CD4-positive, alpha-beta T cell (primary cell): ENCODE measurements at regions of chr1 and their contacts with region 1.

Region 1: DNA sequence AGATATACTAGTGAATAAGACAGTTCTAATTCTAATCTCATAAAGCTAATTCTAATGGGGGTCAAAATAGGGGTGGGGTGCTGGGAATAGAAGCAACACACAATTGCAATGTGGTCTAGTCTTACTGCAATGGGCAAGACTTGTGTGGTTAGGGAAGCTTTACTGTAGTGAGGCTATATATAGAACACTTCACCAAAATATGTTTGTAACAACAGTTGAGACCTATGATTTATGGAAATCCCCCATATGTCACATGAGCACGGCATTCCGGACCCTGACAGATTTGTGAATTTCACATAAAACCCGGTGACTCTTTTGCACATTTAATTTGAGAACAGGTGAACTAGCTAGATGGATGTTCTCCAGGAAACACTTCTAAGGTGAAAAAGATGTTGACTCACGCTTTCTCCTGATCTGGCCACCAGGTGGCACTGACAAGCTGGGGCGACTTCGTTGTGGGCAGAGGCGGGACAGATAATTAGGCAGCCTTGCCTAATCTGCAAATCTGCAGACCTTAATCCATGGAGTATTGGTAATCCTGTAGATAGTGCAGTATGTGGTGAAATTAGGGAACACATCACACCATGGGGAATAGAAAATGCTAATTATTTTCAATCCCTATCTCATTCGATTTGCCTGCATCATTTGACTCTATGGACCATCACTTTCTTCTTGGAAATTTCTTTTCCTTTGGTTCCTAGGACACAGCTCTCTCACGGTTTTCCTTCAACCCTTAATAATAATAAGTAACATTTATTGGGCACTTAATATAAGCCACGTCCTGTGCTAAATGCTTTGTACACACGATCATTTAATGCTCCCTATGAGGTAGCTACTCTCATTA is 37.7 kb downstream of the KIAA0040 start:
- DNase-seq: peak; percentile 66 to 87 (median 74)
- ATAC-seq: peak; percentile 61
- H3K4me3 ChIP-seq: no peak overlapping the region
- H3K4me3 Mint-ChIP-seq: no peak overlapping the region
- H3K27ac ChIP-seq: no peak overlapping the region
- H3K27ac Mint-ChIP-seq: no peak overlapping the region
- H3K4me1 ChIP-seq: peaks cover 12% of the 10 kb centered on the region
- H3K4me1 Mint-ChIP-seq: peaks cover 25% of the 10 kb centered on the region
- H3K27me3 ChIP-seq: peaks cover 8 to 10% of the 10 kb centered on the region in 2 experiments
- H3K27me3 Mint-ChIP-seq: peaks cover 40% of the 10 kb centered on the region
- CTCF ChIP-seq: peak; percentile 86

Region 2: GRCh38 chr1:175169305-175170018 is 14.6 kb after region 1 on chr1:
- CTCF ChIA-PET with region 1: interaction called, 11 read pairs
- POLR2A ChIA-PET with region 1: no interaction called
- intact Hi-C with region 1: no loop called
- DNase-seq: no peak
- ATAC-seq: no peak
- H3K4me3 ChIP-seq: no peak overlapping the region
- H3K4me3 Mint-ChIP-seq: no peak overlapping the region
- H3K27ac ChIP-seq: no peak overlapping the region
- H3K27ac Mint-ChIP-seq: peak overlapping the region; percentile 22
- H3K4me1 ChIP-seq: peaks cover 31% of the 10 kb centered on the region
- H3K4me1 Mint-ChIP-seq: peaks cover 72% of the 10 kb centered on the region
- H3K27me3 ChIP-seq: no peaks in the 10 kb centered on the region
- H3K27me3 Mint-ChIP-seq: no peaks in the 10 kb centered on the region
- CTCF ChIP-seq: no peak

Region 3: GRCh38 chr1:175208773-175209492 is 54.1 kb after region 1 on chr1:
- CTCF ChIA-PET with region 1: interaction called, 7 read pairs
- POLR2A ChIA-PET with region 1: interaction called, 11 read pairs
- intact Hi-C with region 1: loop called in 1 of 2 experiments (anchors 1 kb)
- DNase-seq: peak; percentile 28 to 90 (median 44)
- ATAC-seq: peak; percentile 92
- H3K4me3 ChIP-seq: peak overlapping the region; percentile 25
- H3K4me3 Mint-ChIP-seq: peak overlapping the region; percentile 86
- H3K27ac ChIP-seq: peak overlapping the region; percentile 37 to 56
- H3K27ac Mint-ChIP-seq: peak overlapping the region; percentile 86
- H3K4me1 ChIP-seq: peaks cover 37% of the 10 kb centered on the region
- H3K4me1 Mint-ChIP-seq: peaks cover 86% of the 10 kb centered on the region
- H3K27me3 ChIP-seq: no peaks in the 10 kb centered on the region
- H3K27me3 Mint-ChIP-seq: no peaks in the 10 kb centered on the region
- CTCF ChIP-seq: no peak

Region 4: GRCh38 chr1:175481126-175482066 is 326.5 kb after region 1 on chr1:
- CTCF ChIA-PET with region 1: interaction called, 7 read pairs
- POLR2A ChIA-PET with region 1: no interaction called
- intact Hi-C with region 1: loop called in 1 of 2 experiments (anchors 5 kb)
- DNase-seq: peak in 3 of 14 experiments; percentile 6 to 15 (median 10)
- ATAC-seq: no peak
- H3K4me3 ChIP-seq: no peak overlapping the region
- H3K4me3 Mint-ChIP-seq: no peak overlapping the region
- H3K27ac ChIP-seq: no peak overlapping the region
- H3K27ac Mint-ChIP-seq: no peak overlapping the region
- H3K4me1 ChIP-seq: no peaks in the 10 kb centered on the region
- H3K4me1 Mint-ChIP-seq: no peaks in the 10 kb centered on the region
- H3K27me3 ChIP-seq: no peaks in the 10 kb centered on the region
- H3K27me3 Mint-ChIP-seq: peaks cover 21% of the 10 kb centered on the region
- CTCF ChIP-seq: peak; percentile 58

Region 5: GRCh38 chr1:175824079-175824478 is 669.2 kb after region 1 on chr1:
- CTCF ChIA-PET with region 1: no interaction called
- POLR2A ChIA-PET with region 1: no interaction called
- intact Hi-C with region 1: loop called in 1 of 2 experiments (anchors 10 kb)
- DNase-seq: peak in 4 of 14 experiments; percentile 1 to 16 (median 8)
- ATAC-seq: no peak
- H3K4me3 ChIP-seq: no peak overlapping the region
- H3K4me3 Mint-ChIP-seq: no peak overlapping the region
- H3K27ac ChIP-seq: no peak overlapping the region
- H3K27ac Mint-ChIP-seq: no peak overlapping the region
- H3K4me1 ChIP-seq: no peaks in the 10 kb centered on the region
- H3K4me1 Mint-ChIP-seq: no peaks in the 10 kb centered on the region
- H3K27me3 ChIP-seq: peaks cover 0 to 4% of the 10 kb centered on the region in 2 experiments
- H3K27me3 Mint-ChIP-seq: peaks cover 23% of the 10 kb centered on the region
- CTCF ChIP-seq: no peak

Region 6: DNA sequence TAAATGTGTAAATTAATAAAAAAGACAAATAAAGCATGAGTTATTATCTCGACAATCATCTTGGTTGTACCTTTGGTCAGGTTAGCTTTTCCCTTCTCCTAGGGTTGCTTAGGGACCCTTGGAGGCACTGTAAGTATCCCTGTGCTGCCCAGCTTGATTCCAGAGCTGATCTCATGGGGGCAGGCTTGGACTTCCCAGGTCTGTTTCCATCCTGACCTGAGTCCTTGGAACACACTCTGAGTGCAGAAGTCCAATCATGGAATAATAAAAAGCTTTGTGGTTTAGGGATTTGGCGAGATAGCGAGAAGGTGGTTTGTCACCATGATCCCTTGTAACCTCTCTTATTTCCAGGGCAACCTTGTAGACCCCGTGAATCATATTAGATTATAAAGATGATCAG is 1289.4 kb after region 1 on chr1:
- CTCF ChIA-PET with region 1: no interaction called
- POLR2A ChIA-PET with region 1: no interaction called
- intact Hi-C with region 1: no loop called
- DNase-seq: no peak
- ATAC-seq: no peak
- H3K4me3 ChIP-seq: no peak overlapping the region
- H3K4me3 Mint-ChIP-seq: no peak overlapping the region
- H3K27ac ChIP-seq: no peak overlapping the region
- H3K27ac Mint-ChIP-seq: no peak overlapping the region
- H3K4me1 ChIP-seq: no peaks in the 10 kb centered on the region
- H3K4me1 Mint-ChIP-seq: no peaks in the 10 kb centered on the region
- H3K27me3 ChIP-seq: no peaks in the 10 kb centered on the region
- H3K27me3 Mint-ChIP-seq: no peaks in the 10 kb centered on the region
- CTCF ChIP-seq: no peak

Region 7: GRCh38 chr1:176880954-176881595 is 1726.2 kb after region 1 on chr1:
- CTCF ChIA-PET with region 1: no interaction called
- POLR2A ChIA-PET with region 1: no interaction called
- intact Hi-C with region 1: loop called in 1 of 2 experiments (anchors 10 kb)
- DNase-seq: peak in 8 of 14 experiments; percentile 4 to 41 (median 22)
- ATAC-seq: no peak
- H3K4me3 ChIP-seq: no peak overlapping the region
- H3K4me3 Mint-ChIP-seq: no peak overlapping the region
- H3K27ac ChIP-seq: no peak overlapping the region
- H3K27ac Mint-ChIP-seq: no peak overlapping the region
- H3K4me1 ChIP-seq: no peaks in the 10 kb centered on the region
- H3K4me1 Mint-ChIP-seq: no peaks in the 10 kb centered on the region
- H3K27me3 ChIP-seq: peaks cover 0 to 7% of the 10 kb centered on the region in 2 experiments
- H3K27me3 Mint-ChIP-seq: no peaks in the 10 kb centered on the region
- CTCF ChIP-seq: no peak